A549 (cell line): ENCODE measurements at regions of chr17 and their contacts with region 1.

Region 1: GRCh38 chr17:2054512-2055291 is at the start of gene HIC1:
- DNase-seq: peak; percentile 83 to 92
- ATAC-seq: peak; percentile 48 to 82
- H3K4me3 ChIP-seq: peak within 1 kb of the TSS; percentile 50
- H3K27ac ChIP-seq: peak within 1 kb of the TSS; percentile 39 to 82; a peak in 5 of 6 replicates
- H3K4me1 ChIP-seq: 0 out of 3 replicates have a peak, but pooled peaks cover 5% of the 10 kb centered on the region
- CTCF ChIP-seq: peak; percentile 98
- EP300 ChIP-seq: no peak
- POLR2A ChIP-seq: no peak
- RAD21 ChIP-seq: peak; percentile 71 to 94
- polyA plus RNA-seq, gene HIC1: 0.13 and 0.28 TPM in 2 replicates

Region 2: GRCh38 chr17:1714427-1714979 is 340.2 kb before region 1 on chr17:
- CTCF ChIA-PET with region 1: no interaction called
- POLR2A ChIA-PET with region 1: no interaction called
- DNase-seq: peak; percentile 95 to 97
- ATAC-seq: peak; percentile 25 to 57
- H3K4me3 ChIP-seq: peak overlapping the region; percentile 87
- H3K27ac ChIP-seq: peak overlapping the region; percentile 93 to 95
- H3K4me1 ChIP-seq: peaks cover 51% of the 10 kb centered on the region
- CTCF ChIP-seq: no peak
- EP300 ChIP-seq: peak in 1 of 2 experiments; percentile 41; a peak in 1 of 5 replicates
- POLR2A ChIP-seq: no peak
- RAD21 ChIP-seq: no peak

Region 3: DNA sequence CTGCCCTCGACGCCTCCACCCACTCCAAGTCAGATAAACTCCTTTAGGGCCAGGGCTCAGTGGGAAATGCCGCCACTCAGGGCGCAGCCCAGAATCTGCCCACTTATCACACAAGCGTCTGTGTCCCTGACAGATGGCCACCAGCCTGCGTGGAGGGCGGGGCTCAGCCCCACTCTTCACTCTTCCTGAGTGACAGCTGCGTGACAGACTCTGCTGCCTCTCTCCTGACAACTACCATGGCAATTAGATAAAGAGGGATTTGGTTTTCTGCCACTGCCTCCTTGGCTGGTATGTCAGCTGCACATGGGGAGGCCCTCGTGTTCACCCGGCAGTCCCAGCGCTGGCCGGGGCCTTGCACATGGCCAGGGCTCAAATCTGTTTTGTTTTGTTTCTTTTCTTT is 125.7 kb before region 1 on chr17:
- CTCF ChIA-PET with region 1: no interaction called
- POLR2A ChIA-PET with region 1: no interaction called
- DNase-seq: no peak
- ATAC-seq: peak; percentile 25 to 40; a peak in 4 of 6 replicates
- H3K4me3 ChIP-seq: no peak overlapping the region
- H3K27ac ChIP-seq: no peak overlapping the region
- H3K4me1 ChIP-seq: no peaks in the 10 kb centered on the region
- CTCF ChIP-seq: no peak
- EP300 ChIP-seq: no peak
- POLR2A ChIP-seq: no peak
- RAD21 ChIP-seq: no peak

Region 4: DNA sequence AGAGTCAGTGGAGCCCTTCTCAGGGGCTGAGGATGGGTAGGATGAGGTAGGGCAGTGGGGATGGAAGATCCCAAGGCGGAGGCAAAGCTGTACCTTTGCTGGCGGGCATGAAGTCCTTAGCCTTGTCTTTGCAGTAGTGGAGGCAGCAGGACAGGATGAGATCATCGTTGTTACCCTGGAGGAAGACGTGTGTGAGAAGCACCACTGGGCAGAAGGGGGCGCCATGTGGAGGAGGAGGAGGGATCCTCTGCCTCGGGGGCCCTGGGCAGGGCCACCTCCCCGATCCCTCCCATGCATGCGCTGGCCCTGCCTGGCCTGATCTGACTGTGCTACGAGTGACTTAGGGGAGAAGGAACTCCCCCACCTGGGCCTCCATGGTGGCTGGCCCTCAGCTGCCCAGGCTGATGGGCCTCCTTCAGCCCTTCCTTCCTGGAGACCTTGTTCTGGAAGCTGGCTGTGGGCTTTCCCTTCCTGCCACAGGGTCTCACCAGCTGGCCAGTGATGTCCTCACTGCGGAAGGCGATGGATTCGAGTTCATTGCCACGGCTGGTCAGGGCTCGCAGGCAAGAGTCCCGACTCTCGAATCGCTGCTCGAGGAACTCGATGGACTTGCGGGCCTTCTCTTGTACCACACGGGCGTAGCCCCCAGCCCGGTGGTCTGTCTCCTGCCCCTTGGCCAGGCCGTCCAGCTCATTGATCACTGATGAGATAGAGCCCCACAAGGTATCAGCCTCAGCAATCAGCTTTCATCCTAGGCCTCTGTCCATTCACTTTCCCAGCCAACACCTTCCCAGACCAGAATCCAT is 10.5 kb after region 1 on chr17:
- CTCF ChIA-PET with region 1: interaction called, 217 read pairs
- POLR2A ChIA-PET with region 1: no interaction called
- DNase-seq: peak in 1 of 2 experiments; percentile 59
- ATAC-seq: peak; percentile 57 to 82; a peak in 5 of 6 replicates
- H3K4me3 ChIP-seq: no peak overlapping the region
- H3K27ac ChIP-seq: no peak overlapping the region
- H3K4me1 ChIP-seq: no peaks in the 10 kb centered on the region
- CTCF ChIP-seq: peak; percentile 43
- EP300 ChIP-seq: no peak
- POLR2A ChIP-seq: no peak
- RAD21 ChIP-seq: 0 out of 5 replicates have a peak, but pooled peaks of 1 of the 2 experiments have one; percentile 13

Region 5: DNA sequence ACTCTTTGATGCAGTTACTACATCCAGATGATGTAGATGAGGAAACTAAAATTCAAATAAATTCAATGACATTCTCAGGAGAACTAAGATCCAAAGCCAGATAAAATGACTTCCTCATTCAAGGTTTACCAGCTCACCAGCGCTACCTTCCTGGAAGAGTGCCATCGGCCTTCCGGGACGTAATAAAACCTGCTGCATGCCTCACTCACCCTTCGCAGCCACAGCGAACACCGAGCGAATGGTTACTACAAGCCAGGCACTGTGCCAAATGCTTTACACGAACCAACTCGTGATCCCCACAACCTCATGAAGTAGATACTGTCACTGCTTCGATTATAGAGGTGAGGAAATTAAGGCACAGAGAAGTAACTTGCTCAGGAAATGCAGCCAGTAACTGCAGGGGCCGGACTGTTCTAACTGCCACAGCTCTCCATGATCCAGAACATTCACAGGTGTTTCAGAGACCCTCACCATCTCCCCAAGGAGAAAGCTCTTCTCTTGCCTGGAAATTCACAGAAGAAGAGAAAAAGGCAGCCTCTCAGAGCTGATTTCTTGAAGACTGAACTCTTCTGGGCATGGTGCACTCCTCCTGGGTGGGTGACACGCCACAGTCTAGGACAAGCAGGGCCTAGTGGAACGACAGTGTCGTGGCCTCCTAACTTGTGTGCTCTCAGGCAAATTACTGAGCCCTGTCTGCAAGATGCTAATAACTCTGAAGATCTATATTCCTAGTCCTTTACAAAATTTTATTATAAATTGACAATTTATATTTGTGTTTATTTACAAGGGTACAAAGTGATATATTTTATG is 47.0 kb after region 1 on chr17:
- CTCF ChIA-PET with region 1: interaction called, 14 read pairs
- POLR2A ChIA-PET with region 1: no interaction called
- DNase-seq: no peak
- ATAC-seq: no peak
- H3K4me3 ChIP-seq: no peak overlapping the region
- H3K27ac ChIP-seq: no peak overlapping the region
- H3K4me1 ChIP-seq: no peaks in the 10 kb centered on the region
- CTCF ChIP-seq: no peak
- EP300 ChIP-seq: no peak
- POLR2A ChIP-seq: no peak
- RAD21 ChIP-seq: no peak

Region 6: DNA sequence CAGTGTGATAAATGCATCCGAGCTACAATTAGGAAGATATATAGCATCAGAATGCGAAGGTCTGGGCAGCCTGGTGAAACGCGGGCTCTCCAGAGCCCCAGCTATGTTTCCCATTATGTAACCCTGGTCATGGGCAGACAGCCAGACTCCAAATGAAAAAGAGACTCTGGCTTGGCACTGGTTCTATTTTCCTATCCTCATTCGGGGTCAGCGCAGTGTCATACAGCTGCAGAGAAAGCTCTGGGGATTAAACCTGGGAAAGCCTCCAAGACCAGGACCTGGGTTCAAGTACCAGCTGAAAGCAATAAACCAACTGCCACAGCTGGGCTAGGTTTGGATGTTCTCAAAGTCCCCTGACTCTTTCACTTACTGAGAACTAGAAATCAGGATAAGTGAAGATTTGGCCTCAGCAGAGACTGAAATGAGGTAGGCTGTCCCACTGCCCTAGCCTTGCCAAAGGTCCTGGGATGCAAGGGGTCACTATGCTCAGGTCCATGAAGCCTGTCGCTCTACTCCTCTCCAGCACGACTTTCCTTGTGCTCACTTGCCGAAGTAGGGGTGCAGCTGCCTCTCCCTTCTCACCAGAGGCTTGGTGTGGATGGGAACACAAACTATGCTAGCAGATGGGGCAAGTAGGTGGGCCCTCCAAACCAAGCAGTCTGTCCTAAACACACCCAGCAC is 125.1 kb after region 1 on chr17:
- CTCF ChIA-PET with region 1: interaction called, 12 read pairs
- POLR2A ChIA-PET with region 1: no interaction called
- DNase-seq: no peak
- ATAC-seq: no peak
- H3K4me3 ChIP-seq: no peak overlapping the region
- H3K27ac ChIP-seq: no peak overlapping the region
- H3K4me1 ChIP-seq: peaks cover 9% of the 10 kb centered on the region
- CTCF ChIP-seq: no peak
- EP300 ChIP-seq: no peak
- POLR2A ChIP-seq: no peak
- RAD21 ChIP-seq: no peak

Region 7: GRCh38 chr17:2238432-2239169 is 183.9 kb after region 1 on chr17:
- CTCF ChIA-PET with region 1: interaction called, 492 read pairs
- POLR2A ChIA-PET with region 1: interaction called, 3 read pairs
- DNase-seq: no peak
- ATAC-seq: no peak
- H3K4me3 ChIP-seq: no peak overlapping the region
- H3K27ac ChIP-seq: no peak overlapping the region
- H3K4me1 ChIP-seq: peaks cover 13% of the 10 kb centered on the region
- CTCF ChIP-seq: no peak
- EP300 ChIP-seq: no peak
- POLR2A ChIP-seq: no peak
- RAD21 ChIP-seq: no peak

Region 8: GRCh38 chr17:2282297-2282873 is 227.7 kb after region 1 on chr17:
- CTCF ChIA-PET with region 1: interaction called, 201 read pairs
- POLR2A ChIA-PET with region 1: interaction called, 3 read pairs
- DNase-seq: peak; percentile 67 to 78
- ATAC-seq: peak; percentile 84 to 89
- H3K4me3 ChIP-seq: no peak overlapping the region
- H3K27ac ChIP-seq: no peak overlapping the region
- H3K4me1 ChIP-seq: no peaks in the 10 kb centered on the region
- CTCF ChIP-seq: peak; percentile 71
- EP300 ChIP-seq: no peak
- POLR2A ChIP-seq: no peak
- RAD21 ChIP-seq: peak; percentile 63 to 65